ENCODE measurements at regions of chr5 and their contacts with region 1.

Region 1: DNA sequence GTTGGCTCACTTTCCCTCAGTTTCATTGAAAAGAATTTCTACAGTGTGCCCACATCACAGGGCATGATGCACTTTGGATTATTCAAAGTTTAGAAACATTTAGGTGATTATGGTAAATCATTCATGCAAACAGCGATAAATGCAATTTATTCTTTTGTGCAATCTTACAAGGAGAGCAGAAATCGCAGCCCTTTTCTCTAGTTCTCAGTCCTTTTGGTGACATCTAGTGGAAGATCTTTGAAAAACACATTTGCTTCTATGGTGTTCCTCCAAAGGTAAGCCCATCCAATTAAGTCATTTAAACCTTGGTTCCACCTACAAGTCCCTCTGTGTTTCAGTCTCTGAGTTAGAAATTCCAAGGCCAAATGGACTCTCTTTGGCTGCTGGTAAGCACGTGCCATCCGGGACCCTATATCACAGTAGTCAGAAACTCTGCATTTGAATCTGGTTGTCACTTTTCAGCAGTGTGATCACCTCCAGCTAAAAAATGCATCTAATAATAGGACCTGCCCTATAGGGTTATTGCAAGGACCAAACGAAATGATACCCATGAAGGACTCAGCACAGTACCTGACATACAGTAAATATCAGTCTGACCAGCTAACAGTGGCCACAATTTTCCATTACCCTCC is 66.4 kb downstream of the MACROH2A1 start:
- DNase-seq: no peak
- ATAC-seq: peak in 2 of 4 donors; percentile 52 to 67
- H3K4me3 ChIP-seq: no peak overlapping the region
- H3K27ac ChIP-seq: no peak overlapping the region
- H3K4me1 ChIP-seq: peaks cover 22% of the 10 kb centered on the region
- H3K27me3 ChIP-seq: no peaks in the 10 kb centered on the region
- CTCF ChIP-seq: peak; percentile 64

Region 2: GRCh38 chr5:134917070-134917815 is 415.4 kb before region 1 on chr5:
- intact Hi-C with region 1: loop called in 1 of 2 experiments (anchors 10 kb)
- DNase-seq: no peak
- ATAC-seq: no peak
- H3K4me3 ChIP-seq: no peak overlapping the region
- H3K27ac ChIP-seq: no peak overlapping the region
- H3K4me1 ChIP-seq: no peaks in the 10 kb centered on the region
- H3K27me3 ChIP-seq: no peaks in the 10 kb centered on the region
- CTCF ChIP-seq: no peak

Region 3: DNA sequence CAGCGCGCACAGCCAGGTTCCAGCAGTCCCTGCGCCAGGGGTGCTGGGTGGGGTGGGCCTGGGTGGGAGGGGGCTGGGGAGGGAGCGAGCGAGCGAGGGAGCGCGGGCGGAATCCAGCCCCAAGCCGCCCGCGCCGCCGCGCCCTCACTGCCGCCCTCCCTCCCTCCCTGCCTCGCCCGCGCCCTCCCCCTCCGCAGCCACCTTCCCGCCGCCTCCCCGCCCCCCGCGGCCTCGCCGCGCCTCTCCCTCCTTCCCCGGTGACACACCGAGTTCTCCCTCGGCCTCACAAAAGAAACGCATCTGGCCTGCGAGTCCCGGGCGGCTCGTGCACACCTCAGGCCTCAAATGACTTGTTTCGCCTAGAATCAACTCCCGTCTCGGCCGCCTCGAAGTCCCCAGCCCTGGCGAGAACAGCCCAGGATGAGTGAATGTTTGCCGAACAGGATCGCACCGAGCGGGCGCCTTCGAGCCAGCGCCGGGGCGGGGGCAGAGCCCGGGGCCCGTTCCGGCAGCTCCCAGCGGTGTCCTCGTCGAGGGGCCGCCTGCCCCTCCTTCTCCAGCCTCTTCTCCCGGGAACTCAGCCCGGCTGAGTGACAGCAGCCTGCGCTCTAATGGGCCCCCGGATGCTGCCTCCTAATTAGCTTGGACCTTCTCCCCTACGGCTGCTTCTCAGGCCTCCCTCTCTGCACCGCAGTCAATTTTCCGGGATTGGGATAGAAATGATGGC is 298.2 kb before region 1 on chr5:
- intact Hi-C with region 1: loop called in 1 of 2 experiments (anchors 10 kb)
- DNase-seq: peak; percentile 66 to 92
- ATAC-seq: peak; percentile 72 to 81 (median 75)
- H3K4me3 ChIP-seq: peak overlapping the region; percentile 85
- H3K27ac ChIP-seq: peak overlapping the region; percentile 90
- H3K4me1 ChIP-seq: peaks cover 24% of the 10 kb centered on the region
- H3K27me3 ChIP-seq: peaks cover 0 to 46% (median 4%) of the 10 kb centered on the region in 3 donors
- CTCF ChIP-seq: no peak

Region 4: GRCh38 chr5:135245521-135246499 is 86.8 kb before region 1 on chr5:
- intact Hi-C with region 1: loop called in 1 of 2 experiments (anchors 5 kb)
- DNase-seq: no peak
- ATAC-seq: no peak
- H3K4me3 ChIP-seq: no peak overlapping the region
- H3K27ac ChIP-seq: peak overlapping the region; percentile 90
- H3K4me1 ChIP-seq: peaks cover 55% of the 10 kb centered on the region
- H3K27me3 ChIP-seq: no peaks in the 10 kb centered on the region
- CTCF ChIP-seq: no peak

Region 5: DNA sequence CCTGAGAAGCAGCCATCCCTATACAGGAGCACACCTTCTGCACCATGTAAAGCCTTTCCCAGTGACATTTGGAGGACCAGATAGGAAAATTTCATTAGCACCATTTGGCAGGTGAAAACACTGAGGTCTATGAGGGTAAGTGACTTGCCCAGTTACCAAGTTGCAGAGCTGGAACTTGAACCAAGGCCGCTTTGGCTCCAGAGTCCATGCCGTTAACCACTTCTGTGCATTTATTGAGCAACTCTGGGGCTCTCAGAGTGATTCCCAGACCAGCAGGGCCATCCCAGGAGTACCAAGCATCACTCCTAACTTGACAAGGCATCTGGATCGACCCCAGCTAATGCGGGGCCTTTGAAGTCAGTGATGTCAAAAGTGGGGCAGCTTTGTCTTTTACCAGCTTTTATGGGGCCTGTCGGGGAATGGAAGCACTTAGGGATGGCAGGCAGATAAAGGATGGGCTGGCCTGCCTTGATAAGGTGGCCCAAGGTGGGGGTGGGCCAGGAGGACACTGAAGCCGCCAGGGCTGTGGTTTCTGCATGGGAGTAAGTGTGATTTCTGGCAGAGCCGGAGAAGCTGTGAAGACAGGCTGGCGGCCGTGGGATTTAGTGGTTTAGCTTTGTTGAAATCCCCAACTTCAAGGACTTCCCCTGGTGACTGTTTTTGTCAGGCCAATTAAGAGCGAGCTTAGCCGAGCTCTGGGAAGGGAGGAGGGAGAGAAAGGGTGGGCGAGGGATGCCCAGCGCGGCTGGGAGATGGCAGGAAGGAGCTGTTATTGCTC is 60.9 kb before region 1 on chr5:
- intact Hi-C with region 1: loop called in 1 of 2 experiments (anchors 5 kb)
- DNase-seq: no peak
- ATAC-seq: peak; percentile 5 to 25 (median 17)
- H3K4me3 ChIP-seq: no peak overlapping the region
- H3K27ac ChIP-seq: peak overlapping the region; percentile 83
- H3K4me1 ChIP-seq: peaks cover 39% of the 10 kb centered on the region
- H3K27me3 ChIP-seq: no peaks in the 10 kb centered on the region
- CTCF ChIP-seq: no peak